ENCODE measurements at regions of chr17 and their contacts with region 1.

Region 1: GRCh38 chr17:49567871-49568694 is 7.6 kb upstream of the NXPH3 start:
- DNase-seq: peak; percentile 97 to 99
- H3K4me3 ChIP-seq: peak overlapping the region; percentile 41
- H3K4me3 Mint-ChIP-seq: peak overlapping the region; percentile 73
- H3K27ac Mint-ChIP-seq: no peak overlapping the region
- H3K4me1 ChIP-seq: peaks cover 4% of the 10 kb centered on the region
- H3K4me1 Mint-ChIP-seq: peaks cover 7% of the 10 kb centered on the region
- H3K27me3 ChIP-seq: no peaks in the 10 kb centered on the region; the same call in 1 of the 2 replicates
- H3K27me3 Mint-ChIP-seq: peaks cover 19% of the 10 kb centered on the region
- CTCF ChIP-seq: peak; percentile 99 to 100

Region 2: GRCh38 chr17:49431743-49432142 is 136.3 kb before region 1 on chr17:
- CTCF ChIA-PET with region 1: no interaction called
- POLR2A ChIA-PET with region 1: no interaction called
- intact Hi-C with region 1: no loop called
- DNase-seq: peak in 1 of 2 experiments; percentile 42
- H3K4me3 ChIP-seq: no peak overlapping the region
- H3K4me3 Mint-ChIP-seq: no peak overlapping the region
- H3K27ac Mint-ChIP-seq: no peak overlapping the region
- H3K4me1 ChIP-seq: no peaks in the 10 kb centered on the region
- H3K4me1 Mint-ChIP-seq: no peaks in the 10 kb centered on the region
- H3K27me3 ChIP-seq: peaks cover 2% of the 10 kb centered on the region; the same call in 1 of the 2 replicates
- H3K27me3 Mint-ChIP-seq: peaks cover 24% of the 10 kb centered on the region
- CTCF ChIP-seq: no peak

Region 3: DNA sequence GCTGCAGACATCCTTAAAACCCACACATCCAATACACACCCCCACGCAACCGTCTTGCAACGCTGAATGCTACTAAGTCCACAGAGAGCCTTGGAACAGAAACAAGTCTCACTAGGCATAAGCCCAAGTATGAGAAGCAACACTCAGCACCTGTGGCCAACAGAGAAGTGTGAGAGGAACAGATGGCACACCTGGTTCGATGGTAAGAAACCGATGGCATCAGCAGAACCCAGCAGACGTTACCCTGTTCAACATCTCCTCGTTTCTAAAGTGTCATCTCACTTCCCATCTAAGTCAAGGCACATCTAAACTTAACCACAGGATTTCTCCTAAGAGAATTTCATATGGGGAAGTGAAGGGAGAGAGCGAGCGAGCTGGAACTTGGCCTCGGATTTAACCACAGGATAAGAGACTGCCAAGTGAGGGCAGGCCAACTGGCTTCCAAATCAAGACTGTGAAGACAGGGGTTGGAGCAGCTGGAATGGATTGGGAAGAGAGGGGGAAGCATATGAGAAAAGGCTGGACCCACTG is 48.6 kb after region 1 on chr17:
- CTCF ChIA-PET with region 1: interaction called, 13 read pairs
- POLR2A ChIA-PET with region 1: no interaction called
- intact Hi-C with region 1: loop called (anchors 1 kb)
- DNase-seq: no peak
- H3K4me3 ChIP-seq: no peak overlapping the region
- H3K4me3 Mint-ChIP-seq: no peak overlapping the region
- H3K27ac Mint-ChIP-seq: no peak overlapping the region
- H3K4me1 ChIP-seq: peaks cover 20% of the 10 kb centered on the region
- H3K4me1 Mint-ChIP-seq: peaks cover 12% of the 10 kb centered on the region
- H3K27me3 ChIP-seq: no peaks in the 10 kb centered on the region
- H3K27me3 Mint-ChIP-seq: no peaks in the 10 kb centered on the region
- CTCF ChIP-seq: no peak

Region 4: DNA sequence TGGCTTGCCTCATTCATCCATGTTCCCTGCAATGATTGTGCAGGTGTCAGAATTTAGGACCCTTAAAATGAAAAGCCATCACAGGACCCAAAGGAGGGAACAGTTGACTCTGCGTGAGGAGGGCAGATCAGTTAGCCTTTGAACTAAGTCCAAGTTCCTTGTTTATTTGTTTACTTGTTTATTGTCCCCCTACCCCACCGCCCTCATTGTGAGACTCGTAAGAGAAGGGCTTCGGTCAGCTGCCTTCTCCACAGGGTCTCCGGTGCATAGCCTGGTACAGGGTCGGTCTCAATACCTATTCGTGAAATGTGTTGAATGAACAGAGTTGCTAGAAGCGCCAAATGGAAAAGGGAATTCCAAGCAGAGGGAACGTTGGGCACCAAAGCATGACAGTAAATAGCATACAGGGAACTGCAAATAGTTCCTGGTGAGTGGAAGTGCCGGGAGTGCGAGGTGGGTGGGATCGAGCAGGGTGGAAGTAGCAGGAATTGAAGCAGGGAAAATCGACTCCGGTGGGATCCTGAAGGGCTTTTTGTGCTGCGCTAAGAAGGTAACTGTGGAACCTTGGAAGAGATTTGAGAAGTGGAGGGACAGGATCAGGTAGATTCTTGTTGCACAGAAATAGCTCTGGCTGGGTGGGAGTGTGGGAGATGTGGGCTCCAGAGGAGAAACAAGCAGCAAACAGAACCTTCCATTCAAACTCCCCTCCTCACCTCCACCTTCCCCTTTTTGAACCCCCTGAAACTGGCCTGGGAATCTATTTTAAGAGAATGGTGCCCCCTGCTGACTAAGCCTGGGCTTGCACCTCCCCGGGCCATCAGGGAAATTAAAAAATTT is 127.0 kb after region 1 on chr17:
- CTCF ChIA-PET with region 1: interaction called, 114 read pairs
- POLR2A ChIA-PET with region 1: interaction called, 7 read pairs
- intact Hi-C with region 1: loop called (anchors 1 kb)
- DNase-seq: peak; percentile 69 to 84
- H3K4me3 ChIP-seq: no peak overlapping the region
- H3K4me3 Mint-ChIP-seq: peak overlapping the region; percentile 48
- H3K27ac Mint-ChIP-seq: no peak overlapping the region
- H3K4me1 ChIP-seq: no peaks in the 10 kb centered on the region; the same call in 1 of the 2 replicates
- H3K4me1 Mint-ChIP-seq: peaks cover 18% of the 10 kb centered on the region
- H3K27me3 ChIP-seq: no peaks in the 10 kb centered on the region
- H3K27me3 Mint-ChIP-seq: peaks cover 5% of the 10 kb centered on the region
- CTCF ChIP-seq: peak; percentile 99 to 100

Region 5: DNA sequence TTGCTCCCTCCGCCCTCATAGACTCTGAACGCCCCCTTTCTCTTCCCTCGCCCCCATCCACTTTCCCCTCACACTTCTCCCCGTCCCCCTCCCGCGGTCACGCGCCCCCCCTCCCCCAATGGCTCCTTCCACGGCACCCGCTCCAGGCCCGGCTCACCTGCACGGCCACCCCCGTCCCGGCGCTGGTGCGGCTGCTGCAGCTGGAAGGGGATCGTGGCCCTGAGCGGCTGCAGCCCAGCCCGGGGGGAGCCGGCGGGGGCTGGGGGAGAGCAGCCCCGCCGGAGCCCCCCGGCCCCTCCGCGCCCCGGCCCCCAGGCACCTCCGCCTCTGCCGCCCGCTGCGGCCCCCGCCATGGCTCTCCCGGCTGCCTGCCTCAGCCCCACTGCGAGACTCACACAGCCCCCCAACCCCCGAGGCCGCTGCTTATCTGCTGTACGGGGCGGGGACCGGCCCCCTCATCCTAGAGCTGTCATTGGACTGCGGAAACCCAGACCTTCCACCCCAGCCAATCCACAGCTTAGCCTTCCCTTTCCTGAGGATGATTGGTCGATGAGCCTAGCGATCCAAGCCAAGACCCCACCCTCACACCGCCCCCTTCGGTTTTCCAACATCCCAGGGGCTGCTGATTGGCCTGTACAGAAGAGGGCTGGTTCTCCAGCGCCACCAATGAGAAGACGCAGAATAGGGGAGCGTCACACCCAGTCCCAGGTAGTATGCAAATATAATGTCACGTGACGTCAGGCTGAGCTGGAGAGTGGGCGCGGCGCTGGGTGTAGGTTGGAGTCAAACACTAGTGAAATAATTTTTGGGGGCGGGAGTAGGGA is 195.9 kb after region 1 on chr17 and contains the start of gene FAM117A:
- CTCF ChIA-PET with region 1: interaction called, 11 read pairs
- POLR2A ChIA-PET with region 1: interaction called, 6 read pairs
- intact Hi-C with region 1: loop called (anchors 5 kb)
- DNase-seq: peak; percentile 100
- H3K4me3 ChIP-seq: peak within 1 kb of the TSS; percentile 76
- H3K4me3 Mint-ChIP-seq: peak within 1 kb of the TSS; percentile 98
- H3K27ac Mint-ChIP-seq: peak within 1 kb of the TSS; percentile 81
- H3K4me1 ChIP-seq: peaks cover 9% of the 10 kb centered on the region
- H3K4me1 Mint-ChIP-seq: peaks cover 8% of the 10 kb centered on the region
- H3K27me3 ChIP-seq: 0 out of 2 replicates have a peak, but pooled peaks cover 1% of the 10 kb centered on the region
- H3K27me3 Mint-ChIP-seq: peaks cover 13% of the 10 kb centered on the region
- CTCF ChIP-seq: no peak
- total RNA-seq, gene FAM117A: 36.8 and 41.5 TPM in 2 replicates

Region 6: GRCh38 chr17:49851387-49852291 is 283.6 kb after region 1 on chr17:
- CTCF ChIA-PET with region 1: interaction called, 4 read pairs
- POLR2A ChIA-PET with region 1: no interaction called
- intact Hi-C with region 1: loop called (anchors 5 kb)
- DNase-seq: peak; percentile 83 to 92
- H3K4me3 ChIP-seq: peak overlapping the region; percentile 35
- H3K4me3 Mint-ChIP-seq: peak overlapping the region; percentile 65
- H3K27ac Mint-ChIP-seq: peak overlapping the region; percentile 13
- H3K4me1 ChIP-seq: peaks cover 27% of the 10 kb centered on the region
- H3K4me1 Mint-ChIP-seq: peaks cover 22% of the 10 kb centered on the region
- H3K27me3 ChIP-seq: no peaks in the 10 kb centered on the region
- H3K27me3 Mint-ChIP-seq: peaks cover 10% of the 10 kb centered on the region
- CTCF ChIP-seq: peak; percentile 84 to 91

Measured in Caco-2 (cell line).